ENCODE measurements at regions of chr19 and their contacts with region 1.

Region 1: GRCh38 chr19:54115109-54116063 is at the starts of genes PRPF31 and TFPT:
- DNase-seq: peak; percentile 99
- ATAC-seq: peak; percentile 96 to 98
- H3K4me3 ChIP-seq: peak within 1 kb of the TSS; percentile 95
- H3K27ac ChIP-seq: peak within 1 kb of the TSS; percentile 84 to 93
- H3K4me1 ChIP-seq: peaks cover 14% of the 10 kb centered on the region; the same call in 2 of the 3 replicates
- CTCF ChIP-seq: no peak
- EP300 ChIP-seq: no peak
- POLR2A ChIP-seq: peak; percentile 78
- RAD21 ChIP-seq: no peak
- polyA plus RNA-seq, gene PRPF31: 66.9 and 69.8 TPM in 2 replicates
- polyA plus RNA-seq, gene TFPT: 10.8 and 16.1 TPM in 2 replicates

Region 2: DNA sequence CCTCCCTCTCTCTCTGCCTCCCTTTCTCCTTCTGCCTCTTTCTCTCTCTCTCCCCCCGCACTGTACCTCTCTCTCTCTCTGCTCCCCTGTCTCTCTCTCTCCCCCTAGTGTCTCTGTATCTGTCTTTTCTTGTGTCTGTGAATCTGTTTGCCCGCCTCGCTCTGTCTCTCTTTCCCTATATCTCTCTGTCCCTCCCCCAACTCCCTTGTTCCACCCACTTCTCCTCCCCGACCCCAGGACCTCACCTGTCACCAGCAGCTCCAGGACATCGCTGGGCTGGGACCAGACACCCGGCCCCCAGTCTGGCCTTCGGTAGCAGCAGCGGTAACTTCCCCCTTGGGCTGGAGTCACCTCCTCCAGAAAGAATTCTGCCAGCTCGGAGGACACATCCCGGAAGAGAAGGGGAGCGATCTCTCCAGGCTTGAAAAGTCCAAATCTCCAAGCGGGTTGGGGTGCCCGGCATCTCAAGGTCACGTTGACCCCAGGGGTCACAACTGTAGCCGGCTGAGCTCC is 18.7 kb before region 1 on chr19:
- CTCF ChIA-PET with region 1: interaction called, 6 read pairs
- POLR2A ChIA-PET with region 1: interaction called, 18 read pairs
- DNase-seq: peak; percentile 68 to 79
- ATAC-seq: peak; percentile 88 to 89
- H3K4me3 ChIP-seq: peak overlapping the region; percentile 33
- H3K27ac ChIP-seq: peak overlapping the region; percentile 40 to 78; a peak in 5 of 6 replicates
- H3K4me1 ChIP-seq: peaks cover 11% of the 10 kb centered on the region; the same call in 1 of the 3 replicates
- CTCF ChIP-seq: no peak; the same call in 2 of the 3 replicates
- EP300 ChIP-seq: no peak
- POLR2A ChIP-seq: peak; percentile 17; the same call in 1 of the 2 replicates
- RAD21 ChIP-seq: peak in 1 of 2 experiments; percentile 65; a peak in 4 of 5 replicates

Region 3: DNA sequence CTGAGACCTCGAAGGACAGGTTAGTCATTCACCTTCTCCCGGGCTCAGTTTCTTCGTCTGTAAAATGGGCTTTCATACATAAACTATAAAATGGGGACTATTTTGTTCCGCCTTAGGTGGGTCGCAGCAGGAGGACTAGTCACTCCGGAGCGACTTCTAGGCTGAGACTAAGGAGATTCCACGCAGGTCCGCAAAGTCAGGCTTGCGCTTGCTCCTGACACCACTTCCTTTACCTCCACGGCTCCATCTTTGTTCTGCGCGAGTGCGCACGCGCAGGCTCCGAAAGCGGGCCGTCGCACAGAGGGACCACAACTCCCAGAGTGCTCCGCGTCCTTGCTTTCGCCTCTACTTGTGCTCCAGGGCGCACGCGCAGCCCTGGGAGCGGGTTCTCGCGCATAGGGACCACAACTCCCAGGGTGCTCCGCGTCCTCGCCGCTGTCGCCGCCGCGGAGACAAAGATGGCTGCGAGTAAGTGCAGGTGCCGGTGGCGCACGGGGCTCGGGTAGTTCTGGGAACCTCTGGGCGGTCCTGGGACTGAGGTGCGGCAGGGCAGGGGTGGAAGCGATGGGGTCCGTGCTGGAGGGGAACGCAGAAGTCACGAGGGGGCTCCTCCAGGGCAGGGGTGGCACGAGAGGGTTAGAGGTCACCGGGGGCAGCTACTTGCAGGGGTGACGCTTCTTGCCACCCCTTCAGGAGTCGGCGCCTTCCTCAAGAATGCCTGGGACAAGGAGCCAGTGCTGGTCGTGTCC is 12.8 kb before region 1 on chr19 and contains the start of gene NDUFA3:
- CTCF ChIA-PET with region 1: no interaction called
- POLR2A ChIA-PET with region 1: interaction called, 18 read pairs
- DNase-seq: peak; percentile 99
- ATAC-seq: peak; percentile 96 to 99
- H3K4me3 ChIP-seq: peak within 1 kb of the TSS; percentile 68
- H3K27ac ChIP-seq: peak within 1 kb of the TSS; percentile 78 to 93
- H3K4me1 ChIP-seq: 0 out of 3 replicates have a peak, but pooled peaks cover 8% of the 10 kb centered on the region
- CTCF ChIP-seq: no peak
- EP300 ChIP-seq: no peak
- POLR2A ChIP-seq: peak; percentile 75
- RAD21 ChIP-seq: no peak
- polyA plus RNA-seq, gene NDUFA3: 36.5 and 43.5 TPM in 2 replicates

Measured in A549 (cell line).